PC-3 (cell line): ENCODE measurements at regions of chr5 and their contacts with region 1.

Region 1: GRCh38 chr5:181173420-181174342 is 26.3 kb downstream of the OR2V2 start:
- DNase-seq: peak; percentile 80
- ATAC-seq: peak; percentile 61
- H3K4me3 ChIP-seq: peak overlapping the region; percentile 67
- H3K27ac ChIP-seq: peak overlapping the region; percentile 50
- H3K4me1 ChIP-seq: peaks cover 4% of the 10 kb centered on the region; the same call in 1 of the 2 replicates
- H3K27me3 ChIP-seq: no peaks in the 10 kb centered on the region
- CTCF ChIP-seq: 0 out of 2 replicates have a peak, but pooled peaks have one; percentile 31

Region 2: DNA sequence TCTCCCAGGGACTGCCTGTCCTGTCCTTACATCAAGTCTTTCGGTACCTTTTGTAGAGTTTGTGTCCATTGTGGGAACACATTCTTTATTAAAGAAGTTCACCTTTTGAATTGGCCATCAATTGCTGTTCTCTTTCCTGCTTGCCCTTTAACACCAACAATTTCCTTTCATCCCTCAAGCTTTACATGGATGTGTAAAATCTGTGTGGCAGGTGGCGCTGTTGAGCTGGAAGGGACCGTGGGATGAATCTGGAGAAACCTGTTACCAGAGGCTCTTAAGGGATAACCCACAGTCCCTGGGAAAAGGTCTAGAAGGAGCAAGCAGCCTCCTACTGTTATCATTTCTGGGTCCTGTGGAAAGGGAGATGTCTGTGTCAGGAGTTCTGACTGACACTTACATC is 304.7 kb before region 1 on chr5:
- CTCF ChIA-PET with region 1: no interaction called
- POLR2A ChIA-PET with region 1: no interaction called
- intact Hi-C with region 1: loop called (anchors 5 kb)
- DNase-seq: peak; percentile 98
- ATAC-seq: peak; percentile 91
- H3K4me3 ChIP-seq: no peak overlapping the region
- H3K27ac ChIP-seq: no peak overlapping the region
- H3K4me1 ChIP-seq: peaks cover 13% of the 10 kb centered on the region
- H3K27me3 ChIP-seq: no peaks in the 10 kb centered on the region
- CTCF ChIP-seq: peak; percentile 97

Region 3: GRCh38 chr5:181052672-181053487 is 120.8 kb before region 1 on chr5:
- CTCF ChIA-PET with region 1: no interaction called
- POLR2A ChIA-PET with region 1: no interaction called
- intact Hi-C with region 1: loop called (anchors 5 kb)
- DNase-seq: peak; percentile 21
- ATAC-seq: peak; percentile 56
- H3K4me3 ChIP-seq: peak overlapping the region; percentile 74
- H3K27ac ChIP-seq: no peak overlapping the region
- H3K4me1 ChIP-seq: 0 out of 2 replicates have a peak, but pooled peaks cover 3% of the 10 kb centered on the region
- H3K27me3 ChIP-seq: peaks cover 29% of the 10 kb centered on the region
- CTCF ChIP-seq: no peak